ENCODE measurements at regions of chr5 and their contacts with region 1.

Region 1: GRCh38 chr5:112160652-112161391 is 258.3 kb downstream of the EPB41L4A start:
- DNase-seq: peak; percentile 95
- ATAC-seq: peak; percentile 99
- H3K4me3 ChIP-seq: peak overlapping the region; percentile 71 to 97 (median 90)
- H3K4me3 Mint-ChIP-seq: peak overlapping the region; percentile 96
- H3K27ac ChIP-seq: peak overlapping the region; percentile 52 to 83
- H3K27ac Mint-ChIP-seq: peak overlapping the region; percentile 90
- H3K4me1 ChIP-seq: peaks cover 14 to 20% of the 10 kb centered on the region in 2 donors
- H3K4me1 Mint-ChIP-seq: peaks cover 24% of the 10 kb centered on the region
- H3K27me3 ChIP-seq: no peaks in the 10 kb centered on the region
- H3K27me3 Mint-ChIP-seq: peaks cover 4% of the 10 kb centered on the region
- CTCF ChIP-seq: peak; percentile 88

Region 2: GRCh38 chr5:111092062-111092853 is 1068.6 kb before region 1 on chr5 and contains the start of gene WDR36:
- CTCF ChIA-PET with region 1: no interaction called
- POLR2A ChIA-PET with region 1: no interaction called
- intact Hi-C with region 1: loop called (anchors 1 kb)
- DNase-seq: peak; percentile 93
- ATAC-seq: peak; percentile 94
- H3K4me3 ChIP-seq: peak within 1 kb of the TSS; percentile 87 to 94 (median 91)
- H3K4me3 Mint-ChIP-seq: peak within 1 kb of the TSS; percentile 97
- H3K27ac ChIP-seq: peak within 1 kb of the TSS; percentile 70 to 73
- H3K27ac Mint-ChIP-seq: peak within 1 kb of the TSS; percentile 74
- H3K4me1 ChIP-seq: peaks cover 13 to 24% of the 10 kb centered on the region in 2 donors
- H3K4me1 Mint-ChIP-seq: peaks cover 25% of the 10 kb centered on the region
- H3K27me3 ChIP-seq: peaks cover 0 to 7% (median 3%) of the 10 kb centered on the region in 4 experiments
- H3K27me3 Mint-ChIP-seq: peaks cover 6% of the 10 kb centered on the region
- CTCF ChIP-seq: no peak
- total RNA-seq, gene WDR36: 33.9 and 35.2 TPM in 2 replicates

Region 3: GRCh38 chr5:112077180-112077579 is 83.6 kb before region 1 on chr5:
- CTCF ChIA-PET with region 1: no interaction called
- POLR2A ChIA-PET with region 1: no interaction called
- intact Hi-C with region 1: no loop called
- DNase-seq: no peak
- ATAC-seq: no peak
- H3K4me3 ChIP-seq: no peak overlapping the region
- H3K4me3 Mint-ChIP-seq: no peak overlapping the region
- H3K27ac ChIP-seq: no peak overlapping the region
- H3K27ac Mint-ChIP-seq: no peak overlapping the region
- H3K4me1 ChIP-seq: no peaks in the 10 kb centered on the region
- H3K4me1 Mint-ChIP-seq: no peaks in the 10 kb centered on the region
- H3K27me3 ChIP-seq: no peaks in the 10 kb centered on the region
- H3K27me3 Mint-ChIP-seq: no peaks in the 10 kb centered on the region
- CTCF ChIP-seq: no peak

Region 4: DNA sequence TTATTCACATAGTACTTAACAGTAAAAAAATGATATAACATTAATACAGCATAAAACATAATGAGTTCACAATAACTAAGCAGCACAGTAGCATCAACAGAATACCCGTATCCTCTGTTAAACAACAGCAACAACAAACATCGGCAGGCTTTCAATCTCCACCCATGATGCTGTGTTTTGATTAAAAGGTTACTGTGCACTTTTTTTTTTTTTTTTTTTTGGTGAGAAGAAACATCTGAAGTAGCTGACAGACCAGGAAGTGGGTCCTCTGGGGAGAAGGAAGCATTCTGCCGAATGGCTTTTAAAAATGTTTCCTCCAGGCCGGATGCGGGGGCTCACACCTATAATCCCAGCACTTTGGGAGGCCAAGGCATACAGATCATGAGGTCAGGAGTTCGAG is 24.0 kb before region 1 on chr5:
- CTCF ChIA-PET with region 1: no interaction called
- POLR2A ChIA-PET with region 1: no interaction called
- intact Hi-C with region 1: no loop called
- DNase-seq: no peak
- ATAC-seq: no peak
- H3K4me3 ChIP-seq: no peak overlapping the region
- H3K4me3 Mint-ChIP-seq: no peak overlapping the region
- H3K27ac ChIP-seq: no peak overlapping the region
- H3K27ac Mint-ChIP-seq: no peak overlapping the region
- H3K4me1 ChIP-seq: no peaks in the 10 kb centered on the region
- H3K4me1 Mint-ChIP-seq: no peaks in the 10 kb centered on the region
- H3K27me3 ChIP-seq: peaks cover 0 to 3% (median 0%) of the 10 kb centered on the region in 4 experiments
- H3K27me3 Mint-ChIP-seq: peaks cover 26% of the 10 kb centered on the region
- CTCF ChIP-seq: no peak

Region 5: GRCh38 chr5:112174959-112175594 is 14.3 kb after region 1 on chr5:
- CTCF ChIA-PET with region 1: interaction called, 34 read pairs
- POLR2A ChIA-PET with region 1: no interaction called
- intact Hi-C with region 1: no loop called
- DNase-seq: peak; percentile 70
- ATAC-seq: peak; percentile 64
- H3K4me3 ChIP-seq: no peak overlapping the region
- H3K4me3 Mint-ChIP-seq: no peak overlapping the region
- H3K27ac ChIP-seq: no peak overlapping the region
- H3K27ac Mint-ChIP-seq: no peak overlapping the region
- H3K4me1 ChIP-seq: peaks cover 3% of the 10 kb centered on the region in 2 donors
- H3K4me1 Mint-ChIP-seq: peaks cover 4% of the 10 kb centered on the region
- H3K27me3 ChIP-seq: no peaks in the 10 kb centered on the region
- H3K27me3 Mint-ChIP-seq: no peaks in the 10 kb centered on the region
- CTCF ChIP-seq: peak; percentile 86

Region 6: GRCh38 chr5:112860929-112861637 is 700.3 kb after region 1 on chr5 and contains the start of gene SRP19:
- CTCF ChIA-PET with region 1: no interaction called
- POLR2A ChIA-PET with region 1: no interaction called
- intact Hi-C with region 1: loop called (anchors 1 kb)
- DNase-seq: peak; percentile 94
- ATAC-seq: peak; percentile 94
- H3K4me3 ChIP-seq: peak within 1 kb of the TSS; percentile 77 to 99 (median 95)
- H3K4me3 Mint-ChIP-seq: peak within 1 kb of the TSS; percentile 98
- H3K27ac ChIP-seq: peak within 1 kb of the TSS; percentile 83 to 92
- H3K27ac Mint-ChIP-seq: peak within 1 kb of the TSS; percentile 93
- H3K4me1 ChIP-seq: peaks cover 17 to 19% of the 10 kb centered on the region in 2 donors
- H3K4me1 Mint-ChIP-seq: peaks cover 30% of the 10 kb centered on the region
- H3K27me3 ChIP-seq: peaks cover 0 to 2% (median under 1%) of the 10 kb centered on the region in 4 experiments
- H3K27me3 Mint-ChIP-seq: peaks cover 17% of the 10 kb centered on the region
- CTCF ChIP-seq: no peak
- total RNA-seq, gene SRP19: 33.8 and 41.5 TPM in 2 replicates

Region 7: DNA sequence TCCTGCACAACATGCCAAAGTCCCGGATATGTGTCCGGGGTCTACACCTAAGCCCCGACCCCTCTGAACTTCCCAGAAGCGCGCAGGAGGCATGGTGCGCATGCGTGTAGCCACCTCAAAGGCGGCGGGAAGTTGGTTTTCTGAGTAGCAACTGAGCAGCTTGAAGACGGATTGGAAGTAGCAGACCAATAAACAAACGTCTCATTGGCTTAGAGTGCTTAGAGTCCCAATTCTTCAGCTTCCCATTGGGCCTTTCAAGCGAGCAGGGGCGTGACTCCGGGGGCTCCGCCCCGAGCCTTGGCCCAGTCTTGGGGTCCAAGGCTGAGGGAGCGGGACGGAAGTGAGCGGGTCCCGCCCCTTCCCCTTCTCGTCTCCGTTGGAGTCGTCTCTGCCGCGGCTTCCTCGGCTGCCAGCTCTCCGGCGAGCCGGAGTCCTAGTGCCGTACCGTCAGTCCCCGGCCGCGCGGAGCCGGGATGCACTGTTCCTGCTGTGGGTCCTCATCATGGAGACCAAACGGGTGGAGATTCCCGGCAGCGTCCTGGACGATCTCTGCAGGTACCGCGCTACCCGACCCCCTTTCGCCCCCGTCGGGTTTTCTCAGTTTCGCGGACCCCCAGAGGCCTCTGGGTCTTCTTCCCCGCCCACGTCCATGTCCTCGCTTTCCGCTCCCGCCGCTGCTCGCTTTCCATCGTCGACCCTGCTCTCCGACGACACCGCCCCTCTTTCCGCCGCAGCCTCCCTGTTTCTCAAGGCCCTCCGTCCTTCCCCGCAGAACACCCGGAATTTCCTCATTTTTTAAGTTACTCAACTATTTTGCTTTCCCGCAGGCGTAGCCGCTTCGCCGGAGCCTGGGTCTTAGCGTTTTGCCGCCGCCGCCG is 815.8 kb after region 1 on chr5 and contains the start of gene DCP2:
- CTCF ChIA-PET with region 1: no interaction called
- POLR2A ChIA-PET with region 1: interaction called, 4 read pairs
- intact Hi-C with region 1: loop called (anchors 10 kb)
- DNase-seq: peak; percentile 98
- ATAC-seq: peak; percentile 97
- H3K4me3 ChIP-seq: peak within 1 kb of the TSS; percentile 77 to 99 (median 96)
- H3K4me3 Mint-ChIP-seq: peak within 1 kb of the TSS; percentile 97
- H3K27ac ChIP-seq: peak within 1 kb of the TSS; percentile 74 to 84
- H3K27ac Mint-ChIP-seq: peak within 1 kb of the TSS; percentile 88
- H3K4me1 ChIP-seq: peaks cover 14 to 28% of the 10 kb centered on the region in 2 donors
- H3K4me1 Mint-ChIP-seq: peaks cover 43% of the 10 kb centered on the region
- H3K27me3 ChIP-seq: no peaks in the 10 kb centered on the region
- H3K27me3 Mint-ChIP-seq: no peaks in the 10 kb centered on the region
- CTCF ChIP-seq: no peak
- total RNA-seq, gene DCP2: 64.5 and 73.1 TPM in 2 replicates